ENCODE measurements at regions of chr7 and their contacts with region 1.

Region 1: GRCh38 chr7:17559388-17559787 is 260.9 kb downstream of the AHR start:
- DNase-seq: peak; percentile 85
- ATAC-seq: peak; percentile 60
- H3K4me3 ChIP-seq: peak overlapping the region; percentile 48
- H3K27ac ChIP-seq: peak overlapping the region; percentile 99
- H3K4me1 ChIP-seq: peaks cover 49% of the 10 kb centered on the region
- H3K27me3 ChIP-seq: no peaks in the 10 kb centered on the region
- CTCF ChIP-seq: no peak

Region 2: DNA sequence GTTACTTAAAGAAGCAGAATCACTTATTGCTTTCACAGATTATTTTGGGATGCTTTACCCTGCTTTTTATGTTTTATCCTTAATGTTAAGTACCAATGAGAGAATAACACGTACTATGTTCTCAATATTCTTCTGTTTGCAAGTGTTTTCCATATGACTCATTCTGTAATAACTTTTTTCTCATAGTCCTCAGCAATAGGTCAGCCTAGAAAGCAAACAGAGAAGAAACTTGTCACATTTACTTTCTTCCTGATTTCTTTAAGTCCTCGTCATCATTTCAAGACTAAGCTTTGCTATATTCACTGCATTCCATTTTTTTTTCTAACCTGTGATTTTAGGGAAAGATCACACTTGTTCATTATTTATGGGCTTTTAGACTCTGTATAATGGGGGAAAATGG is 747.8 kb before region 1 on chr7:
- CTCF ChIA-PET with region 1: no interaction called
- POLR2A ChIA-PET with region 1: no interaction called
- intact Hi-C with region 1: loop called (anchors 5 kb)
- DNase-seq: peak; percentile 82
- ATAC-seq: peak; percentile 42
- H3K4me3 ChIP-seq: peak overlapping the region; percentile 34
- H3K27ac ChIP-seq: peak overlapping the region; percentile 96
- H3K4me1 ChIP-seq: peaks cover 56% of the 10 kb centered on the region
- H3K27me3 ChIP-seq: no peaks in the 10 kb centered on the region
- CTCF ChIP-seq: no peak

Region 3: DNA sequence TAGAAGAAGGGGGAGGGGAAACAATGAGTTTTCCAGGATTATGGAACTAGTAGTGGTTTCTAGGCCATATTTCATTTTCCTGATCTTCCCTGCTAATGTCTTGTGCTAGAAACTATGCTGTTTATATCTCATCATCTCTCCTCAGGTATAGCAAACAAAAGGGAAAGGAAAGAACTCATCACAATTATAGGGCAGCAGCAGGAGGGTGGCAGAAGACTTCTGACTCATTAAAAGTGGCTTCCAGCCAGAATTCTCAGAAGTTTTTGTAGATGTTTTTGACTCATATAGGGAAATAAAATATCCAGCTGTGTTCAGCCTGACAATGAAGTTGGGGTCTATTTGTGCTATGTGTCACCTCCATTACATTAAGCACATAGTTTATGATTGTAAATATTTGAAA is 254.5 kb before region 1 on chr7:
- CTCF ChIA-PET with region 1: no interaction called
- POLR2A ChIA-PET with region 1: interaction called, 4 read pairs
- intact Hi-C with region 1: loop called (anchors 1 kb)
- DNase-seq: peak; percentile 97
- ATAC-seq: peak; percentile 84
- H3K4me3 ChIP-seq: peak overlapping the region; percentile 55
- H3K27ac ChIP-seq: peak overlapping the region; percentile 73
- H3K4me1 ChIP-seq: peaks cover 50% of the 10 kb centered on the region
- H3K27me3 ChIP-seq: no peaks in the 10 kb centered on the region
- CTCF ChIP-seq: no peak

Region 4: GRCh38 chr7:17408245-17408903 is 151.0 kb before region 1 on chr7:
- CTCF ChIA-PET with region 1: no interaction called
- POLR2A ChIA-PET with region 1: no interaction called
- intact Hi-C with region 1: loop called (anchors 1 kb)
- DNase-seq: peak; percentile 91
- ATAC-seq: peak; percentile 92
- H3K4me3 ChIP-seq: no peak overlapping the region
- H3K27ac ChIP-seq: peak overlapping the region; percentile 68
- H3K4me1 ChIP-seq: peaks cover 50% of the 10 kb centered on the region
- H3K27me3 ChIP-seq: no peaks in the 10 kb centered on the region
- CTCF ChIP-seq: no peak

Region 5: DNA sequence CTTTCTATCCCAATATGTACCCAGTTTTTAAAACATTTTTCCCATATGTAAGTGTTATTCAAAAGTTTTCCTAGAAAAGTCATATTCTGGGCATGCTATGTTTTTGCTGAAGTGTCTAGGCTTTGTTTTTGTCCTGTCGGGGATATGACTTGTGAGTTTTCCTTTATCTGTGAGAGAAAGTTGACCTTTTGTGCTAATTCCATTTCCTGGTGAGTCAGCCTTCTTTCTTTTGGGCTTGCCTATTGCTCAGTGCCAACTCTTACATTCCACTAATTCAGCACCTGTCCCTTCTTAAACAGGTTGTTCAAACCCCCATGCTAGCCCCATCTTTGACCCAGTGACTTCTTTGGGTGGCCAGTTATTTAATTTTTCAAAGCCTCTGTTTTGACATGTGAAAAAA is 114.7 kb before region 1 on chr7:
- CTCF ChIA-PET with region 1: no interaction called
- POLR2A ChIA-PET with region 1: no interaction called
- intact Hi-C with region 1: loop called (anchors 2 kb)
- DNase-seq: peak; percentile 70
- ATAC-seq: peak; percentile 70
- H3K4me3 ChIP-seq: no peak overlapping the region
- H3K27ac ChIP-seq: no peak overlapping the region
- H3K4me1 ChIP-seq: peaks cover 21% of the 10 kb centered on the region
- H3K27me3 ChIP-seq: no peaks in the 10 kb centered on the region
- CTCF ChIP-seq: no peak

Region 6: DNA sequence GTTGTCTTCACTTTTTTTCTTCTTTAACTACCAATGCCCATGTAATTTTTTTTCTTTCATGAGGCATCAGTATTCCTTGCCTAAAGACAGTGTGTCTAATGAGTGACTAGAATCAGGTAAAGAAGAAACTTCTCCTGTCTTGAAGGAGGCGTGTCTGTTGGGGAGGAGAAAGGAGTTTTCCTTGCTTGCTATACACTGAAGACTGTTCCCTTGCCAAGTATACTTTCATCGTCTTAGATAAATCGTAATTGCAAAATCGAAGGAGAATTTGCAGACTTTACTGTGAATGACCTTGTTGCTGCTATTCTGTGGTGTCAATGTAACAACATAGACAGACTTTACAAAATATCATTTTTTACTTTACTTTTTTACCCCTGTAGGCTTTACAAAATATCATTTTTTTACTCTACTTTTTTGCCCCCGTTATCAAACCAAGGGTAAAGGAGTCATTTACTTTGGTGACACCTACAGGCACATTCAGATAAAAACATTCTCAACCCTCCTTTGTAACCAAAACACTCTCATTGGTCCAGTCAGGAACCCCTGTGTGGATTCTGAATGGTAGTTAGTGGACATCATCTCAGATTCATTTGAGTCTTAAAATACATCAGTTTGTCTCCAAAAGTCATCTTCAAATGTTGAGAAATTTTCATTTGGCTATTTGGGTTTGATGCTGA is 28.5 kb before region 1 on chr7:
- CTCF ChIA-PET with region 1: no interaction called
- POLR2A ChIA-PET with region 1: interaction called, 5 read pairs
- intact Hi-C with region 1: loop called (anchors 1 kb)
- DNase-seq: peak; percentile 36
- ATAC-seq: no peak
- H3K4me3 ChIP-seq: no peak overlapping the region
- H3K27ac ChIP-seq: no peak overlapping the region
- H3K4me1 ChIP-seq: peaks cover 36% of the 10 kb centered on the region
- H3K27me3 ChIP-seq: no peaks in the 10 kb centered on the region
- CTCF ChIP-seq: peak; percentile 70

Region 7: DNA sequence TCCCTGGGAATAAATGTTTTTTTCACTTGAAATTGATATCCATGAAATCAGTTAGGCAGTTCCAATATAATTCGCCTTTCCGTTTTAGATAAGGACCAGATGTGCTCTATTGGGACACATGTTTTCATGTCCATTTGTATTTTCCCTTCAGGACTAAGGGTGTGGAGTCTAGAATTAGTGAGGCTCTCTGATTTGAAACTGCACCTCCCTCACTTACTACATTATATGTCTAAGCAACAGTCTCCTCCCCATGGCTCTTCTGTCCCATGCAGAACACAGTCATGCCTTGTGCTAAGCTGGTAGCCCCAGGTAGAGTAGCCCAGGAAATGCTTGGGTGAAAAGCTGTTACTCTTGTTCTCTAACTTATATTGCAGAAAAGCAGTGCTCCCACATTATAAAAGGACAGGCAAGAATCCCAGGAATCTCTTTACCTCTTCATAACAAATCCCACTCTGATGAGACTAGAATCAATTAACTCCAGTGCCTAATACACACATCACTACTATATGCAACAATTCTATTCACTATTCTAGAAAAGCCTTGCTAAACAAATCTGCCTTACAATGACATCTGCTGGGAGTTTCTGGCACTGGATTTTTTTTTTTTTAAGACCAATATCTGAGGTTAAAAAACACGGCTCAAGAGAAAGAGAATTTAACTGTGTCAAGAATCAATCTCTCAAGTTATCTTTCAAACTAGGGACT is 87.0 kb after region 1 on chr7:
- CTCF ChIA-PET with region 1: no interaction called
- POLR2A ChIA-PET with region 1: no interaction called
- intact Hi-C with region 1: loop called (anchors 1 kb)
- DNase-seq: peak; percentile 54
- ATAC-seq: peak; percentile 87
- H3K4me3 ChIP-seq: no peak overlapping the region
- H3K27ac ChIP-seq: no peak overlapping the region
- H3K4me1 ChIP-seq: peaks cover 8% of the 10 kb centered on the region
- H3K27me3 ChIP-seq: no peaks in the 10 kb centered on the region
- CTCF ChIP-seq: peak; percentile 77

Measured in PC-3 (cell line).